IMR-90 (cell line): ENCODE measurements at regions of chr11 and their contacts with region 1.

Region 1: DNA sequence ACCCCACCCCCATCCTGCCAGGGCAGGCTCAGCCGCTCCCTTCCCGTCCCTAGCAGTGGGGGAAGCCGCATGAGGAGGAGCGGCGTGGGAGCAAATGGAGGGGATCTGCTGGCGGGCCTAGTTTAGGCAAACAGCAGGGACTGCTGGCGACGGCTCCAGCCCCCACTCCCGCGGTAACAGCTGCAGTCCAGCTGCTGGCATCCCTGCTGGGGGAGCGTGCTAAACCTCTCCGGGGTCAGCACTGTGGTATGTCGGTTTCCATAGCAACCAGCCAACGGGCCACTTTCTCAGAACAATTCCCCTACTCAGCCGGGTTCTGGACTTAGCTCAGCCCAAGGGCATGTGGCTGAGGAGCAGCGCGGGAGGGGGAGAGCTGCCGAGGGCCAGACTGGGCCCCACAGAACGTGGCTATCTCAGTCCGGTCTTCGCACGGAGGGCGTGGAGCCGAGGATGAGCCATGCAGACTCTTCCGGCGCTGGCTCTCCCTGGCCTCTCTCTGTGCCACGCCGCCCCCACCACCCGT is 98.8 kb downstream of the PKNOX2 start:
- DNase-seq: peak; percentile 100
- ATAC-seq: peak; percentile 93
- H3K4me3 ChIP-seq: no peak overlapping the region
- H3K27ac ChIP-seq: peak overlapping the region; percentile 93
- H3K4me1 ChIP-seq: peaks cover 32% of the 10 kb centered on the region
- H3K27me3 ChIP-seq: no peaks in the 10 kb centered on the region
- CTCF ChIP-seq: no peak
- POLR2A ChIP-seq: peak; percentile 48; the same call in 1 of the 2 replicates
- RAD21 ChIP-seq: peak; percentile 10

Region 2: GRCh38 chr11:125123947-125124617 is 139.2 kb before region 1 on chr11:
- CTCF ChIA-PET with region 1: no interaction called
- POLR2A ChIA-PET with region 1: no interaction called
- dilution Hi-C with region 1: no loop called
- in situ Hi-C with region 1: no loop called
- intact Hi-C with region 1: no loop called
- DNase-seq: peak; percentile 32
- ATAC-seq: no peak
- H3K4me3 ChIP-seq: no peak overlapping the region
- H3K27ac ChIP-seq: no peak overlapping the region
- H3K4me1 ChIP-seq: peaks cover 10% of the 10 kb centered on the region
- H3K27me3 ChIP-seq: no peaks in the 10 kb centered on the region; the same call in none of the 2 replicates
- CTCF ChIP-seq: peak; percentile 36
- POLR2A ChIP-seq: no peak
- RAD21 ChIP-seq: peak; percentile 13; the same call in 1 of the 2 replicates

Region 3: DNA sequence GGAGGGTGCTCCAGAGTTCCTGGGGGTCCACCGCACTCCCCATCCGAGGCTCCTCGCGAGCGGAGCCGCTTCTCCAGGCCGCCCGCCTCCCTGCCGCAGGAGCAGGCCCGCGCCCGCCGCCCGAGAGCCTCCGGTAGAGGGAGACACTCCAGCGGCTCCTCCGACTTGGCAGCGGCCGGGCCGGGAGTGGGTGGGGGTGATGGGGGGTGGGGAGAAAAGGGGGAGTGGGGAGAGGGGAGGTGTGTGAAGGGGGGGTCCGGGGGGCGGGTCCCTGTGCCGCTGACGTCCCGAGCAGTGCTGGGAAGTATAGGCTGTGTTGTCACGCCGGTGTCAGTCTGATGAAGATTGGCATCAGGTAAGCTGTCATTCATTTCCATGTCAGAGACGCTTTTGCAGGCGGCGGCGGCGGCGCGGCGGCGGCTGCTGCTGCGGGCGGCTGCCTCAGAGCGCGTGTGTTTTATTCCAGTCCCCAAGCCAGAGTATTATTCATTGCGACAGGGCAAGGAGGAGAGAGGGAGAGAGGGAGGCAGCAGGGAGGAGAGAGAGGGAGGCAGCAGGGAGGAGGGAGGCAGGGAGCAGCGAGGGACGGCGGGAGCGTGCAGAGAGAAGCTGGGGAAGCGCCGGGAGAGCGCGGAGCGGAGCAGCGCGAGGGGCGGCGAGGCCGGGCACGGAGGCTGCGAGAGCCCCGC is 98.8 kb before region 1 on chr11 and contains the start of gene PKNOX2:
- CTCF ChIA-PET with region 1: interaction called, 3 read pairs
- POLR2A ChIA-PET with region 1: no interaction called
- dilution Hi-C with region 1: no loop called
- in situ Hi-C with region 1: no loop called
- intact Hi-C with region 1: loop called (anchors 1 kb)
- DNase-seq: peak; percentile 67
- ATAC-seq: peak; percentile 69
- H3K4me3 ChIP-seq: peak within 1 kb of the TSS; percentile 65
- H3K27ac ChIP-seq: peak within 1 kb of the TSS; percentile 80
- H3K4me1 ChIP-seq: peaks cover 5% of the 10 kb centered on the region
- H3K27me3 ChIP-seq: peaks cover 2% of the 10 kb centered on the region; the same call in 1 of the 2 replicates
- CTCF ChIP-seq: peak; percentile 66
- POLR2A ChIP-seq: no peak
- RAD21 ChIP-seq: peak; percentile 60
- total RNA-seq, gene PKNOX2: 0.72 and 1.1 TPM in 2 replicates

Region 4: DNA sequence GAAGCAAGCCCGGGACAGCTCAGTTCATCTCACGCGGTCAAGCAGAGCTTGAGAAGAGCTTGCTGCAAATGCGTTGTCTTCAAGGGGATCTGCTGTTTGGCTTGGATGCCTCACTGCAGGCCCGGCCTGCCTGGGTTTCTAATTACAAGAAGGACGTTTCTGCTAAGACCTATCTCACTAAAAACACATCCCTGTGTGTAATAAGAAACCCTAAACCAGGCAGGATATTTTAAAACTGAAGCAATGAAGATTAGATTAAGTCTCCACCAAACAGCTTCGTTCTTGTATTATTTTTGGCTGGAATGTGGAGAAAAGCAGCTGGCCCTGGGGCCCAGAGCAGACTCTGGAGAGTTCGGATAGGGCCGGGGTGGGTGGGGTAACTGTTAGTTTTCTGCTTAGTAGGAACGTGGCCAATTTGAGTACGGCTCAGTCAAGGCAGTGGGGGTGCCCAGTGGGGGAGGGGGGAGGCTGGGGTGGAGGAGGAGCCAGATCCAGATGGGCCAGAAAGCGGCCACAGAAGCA is 92.8 kb before region 1 on chr11:
- CTCF ChIA-PET with region 1: interaction called, 3 read pairs
- POLR2A ChIA-PET with region 1: no interaction called
- dilution Hi-C with region 1: no loop called
- in situ Hi-C with region 1: no loop called
- intact Hi-C with region 1: loop called (anchors 1 kb)
- DNase-seq: peak; percentile 92
- ATAC-seq: peak; percentile 74
- H3K4me3 ChIP-seq: no peak overlapping the region
- H3K27ac ChIP-seq: peak overlapping the region; percentile 85; the same call in 1 of the 2 replicates
- H3K4me1 ChIP-seq: peaks cover 19% of the 10 kb centered on the region
- H3K27me3 ChIP-seq: peaks cover 2% of the 10 kb centered on the region; the same call in 1 of the 2 replicates
- CTCF ChIP-seq: no peak
- POLR2A ChIP-seq: no peak
- RAD21 ChIP-seq: no peak

Region 5: GRCh38 chr11:125188021-125188420 is 75.3 kb before region 1 on chr11:
- CTCF ChIA-PET with region 1: no interaction called
- POLR2A ChIA-PET with region 1: no interaction called
- dilution Hi-C with region 1: no loop called
- in situ Hi-C with region 1: no loop called
- intact Hi-C with region 1: no loop called
- DNase-seq: peak; percentile 54
- ATAC-seq: no peak
- H3K4me3 ChIP-seq: no peak overlapping the region
- H3K27ac ChIP-seq: no peak overlapping the region
- H3K4me1 ChIP-seq: no peaks in the 10 kb centered on the region
- H3K27me3 ChIP-seq: peaks cover 8% of the 10 kb centered on the region
- CTCF ChIP-seq: no peak
- POLR2A ChIP-seq: no peak
- RAD21 ChIP-seq: no peak

Region 6: GRCh38 chr11:125345421-125346178 is 82.3 kb after region 1 on chr11:
- CTCF ChIA-PET with region 1: interaction called, 3 read pairs
- POLR2A ChIA-PET with region 1: no interaction called
- dilution Hi-C with region 1: no loop called
- in situ Hi-C with region 1: no loop called
- intact Hi-C with region 1: loop called (anchors 5 kb)
- DNase-seq: peak; percentile 67
- ATAC-seq: peak; percentile 82
- H3K4me3 ChIP-seq: no peak overlapping the region
- H3K27ac ChIP-seq: no peak overlapping the region
- H3K4me1 ChIP-seq: peaks cover 2% of the 10 kb centered on the region; the same call in 1 of the 2 replicates
- H3K27me3 ChIP-seq: no peaks in the 10 kb centered on the region
- CTCF ChIP-seq: peak; percentile 89
- POLR2A ChIP-seq: no peak
- RAD21 ChIP-seq: peak; percentile 78